ENCODE measurements at regions of chr21 and their contacts with region 1.

Region 1: DNA sequence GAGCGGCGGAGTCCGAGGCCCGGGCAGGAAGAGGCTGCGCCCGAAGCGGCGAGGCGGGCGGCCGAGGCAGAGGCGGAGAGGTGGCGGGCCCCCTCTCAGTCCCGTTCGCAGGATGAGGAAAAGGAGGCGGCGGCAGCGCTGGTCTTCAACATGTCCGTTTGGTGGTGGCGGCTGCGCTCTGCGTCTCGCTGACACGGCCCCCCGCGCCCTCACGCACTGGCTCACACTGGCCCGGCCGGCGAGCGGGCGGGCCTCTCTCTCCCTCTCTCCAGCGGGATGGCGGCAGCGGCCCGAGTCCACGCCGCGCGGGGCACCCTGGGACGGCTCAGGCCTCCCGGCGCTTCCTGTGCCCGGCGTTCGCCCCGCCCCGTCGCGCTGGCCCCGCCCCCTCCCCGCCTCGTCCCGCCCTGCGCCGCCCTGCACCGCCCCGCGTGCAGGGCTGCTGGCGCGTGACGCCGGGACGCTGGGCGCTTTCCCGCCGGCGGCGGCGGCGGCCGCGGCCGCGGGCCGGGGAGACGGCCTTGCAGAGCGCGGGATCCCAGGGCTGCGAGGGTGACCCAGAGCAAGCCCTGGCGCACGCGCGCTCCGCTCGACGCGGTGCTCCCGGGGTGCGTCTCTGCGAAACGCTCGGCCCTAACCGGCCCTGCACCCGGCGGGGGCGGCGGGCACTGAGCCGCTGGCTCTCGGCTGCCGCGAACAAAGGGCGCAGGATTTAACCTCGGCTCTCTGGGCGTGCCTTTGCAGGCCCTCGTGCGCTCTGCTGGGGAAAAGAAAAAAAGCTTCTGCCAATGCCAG is at the start of gene SCAF4:
- DNase-seq: peak; percentile 74
- H3K4me3 Mint-ChIP-seq: peak within 1 kb of the TSS; percentile 86
- H3K27ac Mint-ChIP-seq: peak within 1 kb of the TSS; percentile 72
- H3K4me1 Mint-ChIP-seq: peaks cover 10% of the 10 kb centered on the region
- H3K27me3 Mint-ChIP-seq: no peaks in the 10 kb centered on the region
- total RNA-seq, gene SCAF4: 55.8 and 60.1 TPM in 2 replicates

Region 2: DNA sequence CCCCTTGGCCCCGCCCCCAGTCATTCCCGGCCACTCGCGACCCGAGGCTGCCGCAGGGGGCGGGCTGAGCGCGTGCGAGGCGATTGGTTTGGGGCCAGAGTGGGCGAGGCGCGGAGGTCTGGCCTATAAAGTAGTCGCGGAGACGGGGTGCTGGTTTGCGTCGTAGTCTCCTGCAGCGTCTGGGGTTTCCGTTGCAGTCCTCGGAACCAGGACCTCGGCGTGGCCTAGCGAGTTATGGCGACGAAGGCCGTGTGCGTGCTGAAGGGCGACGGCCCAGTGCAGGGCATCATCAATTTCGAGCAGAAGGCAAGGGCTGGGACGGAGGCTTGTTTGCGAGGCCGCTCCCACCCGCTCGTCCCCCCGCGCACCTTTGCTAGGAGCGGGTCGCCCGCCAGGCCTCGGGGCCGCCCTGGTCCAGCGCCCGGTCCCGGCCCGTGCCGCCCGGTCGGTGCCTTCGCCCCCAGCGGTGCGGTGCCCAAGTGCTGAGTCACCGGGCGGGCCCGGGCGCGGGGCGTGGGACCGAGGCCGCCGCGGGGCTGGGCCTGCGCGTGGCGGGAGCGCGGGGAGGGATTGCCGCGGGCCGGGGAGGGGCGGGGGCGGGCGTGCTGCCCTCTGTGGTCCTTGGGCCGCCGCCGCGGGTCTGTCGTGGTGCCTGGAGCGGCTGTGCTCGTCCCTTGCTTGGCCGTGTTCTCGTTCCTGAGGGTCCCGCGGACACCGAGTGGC is 72.3 kb before region 1 on chr21 and contains the start of gene SOD1:
- intact Hi-C with region 1: loop called (anchors 1 kb)
- DNase-seq: peak; percentile 96
- H3K4me3 Mint-ChIP-seq: peak within 1 kb of the TSS; percentile 99
- H3K27ac Mint-ChIP-seq: peak within 1 kb of the TSS; percentile 98
- H3K4me1 Mint-ChIP-seq: peaks cover 47% of the 10 kb centered on the region
- H3K27me3 Mint-ChIP-seq: no peaks in the 10 kb centered on the region
- total RNA-seq, gene SOD1: 284 and 286 TPM in 2 replicates

Region 3: DNA sequence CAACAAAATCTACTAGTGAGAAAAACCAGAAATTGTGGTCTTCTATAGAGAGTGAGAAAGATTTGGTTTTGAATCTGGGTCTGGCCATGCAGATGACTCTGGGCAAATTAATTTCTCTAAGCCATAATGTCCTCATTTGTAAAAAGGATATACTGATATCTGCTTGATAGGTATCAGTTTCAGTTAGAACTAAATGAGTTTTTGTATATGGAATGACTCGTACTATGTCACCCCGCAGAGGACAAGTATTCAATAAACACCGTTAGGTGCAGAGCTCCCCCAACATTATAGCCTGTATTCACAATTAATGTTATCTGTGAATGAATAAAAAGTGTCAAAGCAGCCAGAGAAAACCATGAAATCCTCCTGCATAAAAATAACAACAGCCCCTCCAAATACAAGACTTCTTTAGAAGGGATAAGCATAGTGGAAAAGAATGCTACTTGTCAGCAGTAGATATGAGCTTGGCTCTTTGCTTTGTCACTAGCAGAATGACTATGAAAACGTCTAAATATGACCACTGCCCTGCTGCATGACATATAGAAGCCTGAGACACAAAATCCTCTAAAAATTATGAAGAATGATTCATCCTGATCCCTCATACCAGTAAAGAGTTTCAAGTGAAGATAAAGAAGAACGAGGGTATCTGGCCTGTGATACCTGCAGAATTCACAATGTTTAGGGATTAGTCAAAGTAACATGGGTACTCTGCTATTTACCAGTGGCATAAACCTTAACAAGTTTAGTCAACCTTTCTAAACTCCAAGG is 17.8 kb before region 1 on chr21:
- intact Hi-C with region 1: loop called (anchors 2 kb)
- DNase-seq: no peak
- H3K4me3 Mint-ChIP-seq: no peak overlapping the region
- H3K27ac Mint-ChIP-seq: peak overlapping the region; percentile 87
- H3K4me1 Mint-ChIP-seq: peaks cover 39% of the 10 kb centered on the region
- H3K27me3 Mint-ChIP-seq: no peaks in the 10 kb centered on the region

Region 4: DNA sequence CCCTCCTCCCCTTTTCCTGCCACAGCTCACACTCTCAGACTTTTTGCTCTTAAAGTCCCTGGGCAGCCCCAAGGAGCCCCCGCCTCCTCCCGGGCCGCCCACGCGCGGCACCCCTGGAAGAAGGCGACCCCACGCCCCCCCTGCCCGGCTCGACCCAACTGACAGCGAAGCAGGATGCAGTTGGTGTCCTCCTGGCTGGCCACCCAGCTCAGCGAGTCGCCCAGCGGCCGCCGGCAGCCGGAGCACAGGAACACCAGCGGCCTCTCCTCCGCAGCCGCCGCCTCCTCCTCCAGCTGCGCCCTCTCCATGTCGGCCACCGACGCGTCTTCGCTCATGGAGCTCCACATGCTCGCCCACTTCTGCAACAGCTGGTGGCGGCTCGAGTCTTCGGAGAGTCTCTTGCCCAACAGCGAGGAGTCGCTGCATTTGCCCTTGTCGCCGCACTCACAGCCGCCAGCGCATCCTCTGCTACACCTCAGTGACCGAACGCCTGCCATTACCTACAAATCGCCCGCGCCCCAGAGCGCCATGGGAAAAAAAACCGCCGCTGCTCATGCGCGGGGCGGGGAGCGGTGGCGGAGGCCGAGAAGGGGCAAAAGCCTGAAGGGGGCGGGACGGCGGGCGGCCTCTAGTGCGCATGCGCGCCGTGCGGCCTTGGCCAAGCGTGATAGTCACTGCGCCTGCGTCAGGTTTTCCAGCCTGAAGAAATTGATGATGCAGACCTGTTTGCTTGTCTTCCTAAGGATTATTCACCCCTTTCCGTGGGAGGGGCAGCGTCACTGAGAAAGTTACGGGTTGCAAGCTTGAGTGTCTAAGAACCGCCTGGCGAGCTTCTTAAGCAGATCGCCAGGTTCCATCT is 546.7 kb after region 1 on chr21 and contains the start of gene MIS18A:
- intact Hi-C with region 1: loop called (anchors 5 kb)
- DNase-seq: peak; percentile 95
- H3K4me3 Mint-ChIP-seq: peak within 1 kb of the TSS; percentile 99
- H3K27ac Mint-ChIP-seq: peak within 1 kb of the TSS; percentile 97
- H3K4me1 Mint-ChIP-seq: peaks cover 27% of the 10 kb centered on the region
- H3K27me3 Mint-ChIP-seq: no peaks in the 10 kb centered on the region
- total RNA-seq, gene MIS18A: 25.0 and 26.3 TPM in 2 replicates

Region 5: DNA sequence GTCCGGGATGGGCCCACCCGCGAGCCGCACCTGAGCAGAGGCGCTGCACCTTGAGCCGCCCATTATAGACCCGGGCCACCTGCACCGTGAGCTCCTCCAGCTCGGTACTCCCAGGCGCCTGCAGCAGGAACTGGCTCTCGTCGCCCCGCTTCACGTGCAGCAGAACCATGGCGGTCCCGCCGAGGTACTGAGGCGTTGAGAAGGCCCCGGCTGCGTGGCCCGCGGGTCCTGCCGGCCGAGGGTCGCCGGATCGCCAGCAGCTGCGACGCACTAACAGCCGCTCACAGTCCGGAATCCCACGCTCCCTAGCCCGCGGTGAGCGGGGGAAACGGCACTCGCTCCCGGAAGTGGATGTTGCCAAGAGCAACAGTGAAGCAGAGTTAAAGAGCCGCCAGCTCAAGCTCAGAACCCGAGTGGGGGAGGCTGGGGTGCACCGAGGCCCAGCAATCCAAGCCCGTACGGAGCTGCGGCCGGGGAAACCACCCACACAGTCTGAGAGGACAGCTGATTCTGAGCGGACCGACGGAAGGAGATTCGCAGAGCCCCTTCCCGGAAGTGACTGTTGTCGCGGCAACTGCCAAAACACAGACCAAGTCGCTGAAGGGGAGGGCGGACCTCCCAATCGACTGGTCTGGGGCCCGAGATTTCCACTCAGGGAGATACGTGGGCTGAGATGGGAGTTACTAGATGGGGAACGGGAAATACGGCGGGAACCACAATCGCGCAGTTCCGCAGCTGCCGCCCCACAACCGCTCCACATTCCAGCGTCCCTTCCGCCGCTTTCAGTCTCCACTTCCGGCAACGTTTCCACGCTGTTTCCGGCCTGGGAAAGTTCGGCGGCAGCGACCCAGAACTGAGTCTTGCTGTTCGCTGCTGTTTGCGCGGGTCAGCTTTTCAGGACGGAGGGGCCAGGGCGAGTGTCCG is 880.3 kb after region 1 on chr21 and contains the start of gene CFAP298:
- intact Hi-C with region 1: loop called (anchors 5 kb)
- DNase-seq: peak; percentile 86
- H3K4me3 Mint-ChIP-seq: peak within 1 kb of the TSS; percentile 99
- H3K27ac Mint-ChIP-seq: peak within 1 kb of the TSS; percentile 89
- H3K4me1 Mint-ChIP-seq: peaks cover 4% of the 10 kb centered on the region
- H3K27me3 Mint-ChIP-seq: peaks cover 2% of the 10 kb centered on the region
- total RNA-seq, gene CFAP298: 44.5 and 48.6 TPM in 2 replicates

Measured in activated T-helper 2 cell treated with anti-CD3 and anti-CD28 coated beads, Interferon-gamma antibody, Interleukin-2, Interleukin-4, amounts not matched to agents 10 μg/mL and 5 μg/mL and 100 μg/mL, durations not matched to agents 14 hours and 24 hours and 36 hours (primary cell).